ENCODE measurements at regions of chr19 and their contacts with region 1.

Region 1: GRCh38 chr19:38849860-38850435 is at the start of gene HNRNPL:
- DNase-seq: peak; percentile 99
- ATAC-seq: peak; percentile 58
- H3K4me3 ChIP-seq: peak within 1 kb of the TSS; percentile 83
- H3K27ac ChIP-seq: peak within 1 kb of the TSS; percentile 97
- H3K4me1 ChIP-seq: peaks cover 28% of the 10 kb centered on the region
- H3K27me3 ChIP-seq: no peaks in the 10 kb centered on the region
- CTCF ChIP-seq: 0 out of 2 replicates have a peak, but pooled peaks have one; percentile 9
- total RNA-seq, gene HNRNPL: 315 and 331 TPM in 2 replicates

Region 2: DNA sequence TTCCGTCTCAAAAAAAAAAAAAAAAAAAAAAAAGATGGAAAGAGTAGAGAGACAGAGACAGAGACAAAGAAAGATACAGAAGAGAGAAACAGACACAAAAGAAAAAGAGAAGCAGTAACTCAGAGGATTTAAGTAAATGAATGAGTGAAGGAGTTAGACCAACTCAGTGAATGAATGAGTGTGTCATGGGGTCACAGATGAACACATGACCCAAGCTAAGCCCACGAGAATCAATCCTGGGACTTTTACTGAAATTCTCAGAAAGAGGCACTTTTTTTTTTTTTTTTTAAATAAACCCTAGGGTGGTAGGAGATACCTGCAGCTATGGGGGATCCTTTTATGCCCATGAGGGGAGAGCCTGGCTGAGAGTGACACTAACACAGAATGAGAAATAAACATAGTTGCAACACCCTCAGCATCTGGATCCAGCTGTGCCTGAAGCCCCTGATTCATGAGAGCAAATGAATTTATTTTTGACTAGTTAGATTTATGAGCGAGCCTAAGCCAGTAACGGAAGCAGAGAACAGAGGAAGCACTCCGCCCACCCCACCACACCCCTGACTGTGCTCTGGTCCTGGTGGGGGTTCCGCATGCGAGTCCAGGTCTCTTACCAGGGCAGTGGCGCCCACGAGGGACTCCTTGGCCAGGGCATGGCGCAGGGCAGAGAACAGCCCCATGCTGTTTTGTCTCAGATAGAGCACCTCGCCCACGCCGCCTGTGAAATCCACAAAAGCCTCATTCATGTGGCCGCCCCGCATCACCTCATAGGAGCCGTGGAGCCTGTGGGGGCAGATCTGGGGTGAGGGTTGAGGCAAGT is 110.3 kb before region 1 on chr19:
- CTCF ChIA-PET with region 1: no interaction called
- POLR2A ChIA-PET with region 1: no interaction called
- intact Hi-C with region 1: no loop called
- DNase-seq: no peak
- ATAC-seq: no peak
- H3K4me3 ChIP-seq: no peak overlapping the region
- H3K27ac ChIP-seq: no peak overlapping the region
- H3K4me1 ChIP-seq: peaks cover 7% of the 10 kb centered on the region; the same call in 1 of the 2 replicates
- H3K27me3 ChIP-seq: no peaks in the 10 kb centered on the region
- CTCF ChIP-seq: no peak

Region 3: GRCh38 chr19:38831142-38831605 is 18.8 kb before region 1 on chr19:
- CTCF ChIA-PET with region 1: no interaction called
- POLR2A ChIA-PET with region 1: interaction called, 10 read pairs
- intact Hi-C with region 1: no loop called
- DNase-seq: peak; percentile 91
- ATAC-seq: peak; percentile 68
- H3K4me3 ChIP-seq: peak overlapping the region; percentile 72
- H3K27ac ChIP-seq: peak overlapping the region; percentile 99
- H3K4me1 ChIP-seq: peaks cover 41% of the 10 kb centered on the region
- H3K27me3 ChIP-seq: no peaks in the 10 kb centered on the region
- CTCF ChIP-seq: no peak

Region 4: DNA sequence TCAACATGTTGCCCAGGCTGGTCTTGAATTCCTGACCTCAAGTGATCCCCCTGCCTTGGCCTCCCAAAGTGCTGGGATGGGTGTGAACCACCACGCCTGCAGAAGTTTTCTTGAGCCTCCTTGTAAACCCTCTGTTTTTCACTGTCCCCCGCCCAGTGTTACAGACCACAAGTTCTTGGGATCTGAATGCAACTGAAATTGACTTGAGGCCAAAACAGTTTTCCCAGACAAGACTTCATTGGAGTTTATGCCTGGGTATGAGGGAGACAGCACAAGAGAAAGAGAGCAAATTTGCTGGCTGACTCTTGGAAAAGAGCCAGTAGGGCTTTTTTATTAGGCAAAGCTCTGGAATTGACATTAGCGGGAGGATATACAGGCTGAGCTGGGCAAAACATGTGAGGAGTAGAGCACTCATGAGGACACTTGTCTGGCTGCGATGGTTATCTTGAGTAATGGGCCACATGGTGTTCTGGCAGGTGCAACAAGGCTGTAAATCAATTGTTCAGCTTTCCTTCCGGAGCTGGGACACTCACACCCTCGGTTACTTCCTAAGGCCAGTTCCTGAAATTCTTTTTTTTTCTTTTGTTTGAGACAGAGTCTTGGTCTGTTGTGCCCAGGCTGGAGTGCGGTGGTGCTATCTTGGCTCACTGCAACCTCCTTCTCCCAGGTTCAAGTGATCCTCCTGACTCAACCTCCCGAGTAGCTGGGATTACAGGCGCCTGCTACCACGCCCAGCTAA is 12.5 kb after region 1 on chr19:
- CTCF ChIA-PET with region 1: interaction called, 6 read pairs
- POLR2A ChIA-PET with region 1: interaction called, 21 read pairs
- intact Hi-C with region 1: no loop called
- DNase-seq: peak; percentile 64
- ATAC-seq: peak; percentile 66
- H3K4me3 ChIP-seq: no peak overlapping the region
- H3K27ac ChIP-seq: no peak overlapping the region
- H3K4me1 ChIP-seq: peaks cover 18% of the 10 kb centered on the region
- H3K27me3 ChIP-seq: no peaks in the 10 kb centered on the region
- CTCF ChIP-seq: no peak

Region 5: GRCh38 chr19:38899447-38900219 is 49.7 kb after region 1 on chr19 and contains the starts of genes NFKBIB and SIRT2:
- CTCF ChIA-PET with region 1: no interaction called
- POLR2A ChIA-PET with region 1: no interaction called
- intact Hi-C with region 1: loop called (anchors 5 kb)
- DNase-seq: peak; percentile 99
- ATAC-seq: peak; percentile 95
- H3K4me3 ChIP-seq: peak within 1 kb of the TSS; percentile 78
- H3K27ac ChIP-seq: 0 out of 2 replicates have a peak within 1 kb of the TSS, but pooled peaks have one; percentile 12
- H3K4me1 ChIP-seq: 0 out of 2 replicates have a peak, but pooled peaks cover 3% of the 10 kb centered on the region
- H3K27me3 ChIP-seq: no peaks in the 10 kb centered on the region
- CTCF ChIP-seq: no peak
- total RNA-seq, gene NFKBIB: 43.7 and 44.9 TPM in 2 replicates
- total RNA-seq, gene SIRT2: 37.9 and 55.2 TPM in 2 replicates